ENCODE measurements at regions of chr12 and their contacts with region 1.

Region 1: DNA sequence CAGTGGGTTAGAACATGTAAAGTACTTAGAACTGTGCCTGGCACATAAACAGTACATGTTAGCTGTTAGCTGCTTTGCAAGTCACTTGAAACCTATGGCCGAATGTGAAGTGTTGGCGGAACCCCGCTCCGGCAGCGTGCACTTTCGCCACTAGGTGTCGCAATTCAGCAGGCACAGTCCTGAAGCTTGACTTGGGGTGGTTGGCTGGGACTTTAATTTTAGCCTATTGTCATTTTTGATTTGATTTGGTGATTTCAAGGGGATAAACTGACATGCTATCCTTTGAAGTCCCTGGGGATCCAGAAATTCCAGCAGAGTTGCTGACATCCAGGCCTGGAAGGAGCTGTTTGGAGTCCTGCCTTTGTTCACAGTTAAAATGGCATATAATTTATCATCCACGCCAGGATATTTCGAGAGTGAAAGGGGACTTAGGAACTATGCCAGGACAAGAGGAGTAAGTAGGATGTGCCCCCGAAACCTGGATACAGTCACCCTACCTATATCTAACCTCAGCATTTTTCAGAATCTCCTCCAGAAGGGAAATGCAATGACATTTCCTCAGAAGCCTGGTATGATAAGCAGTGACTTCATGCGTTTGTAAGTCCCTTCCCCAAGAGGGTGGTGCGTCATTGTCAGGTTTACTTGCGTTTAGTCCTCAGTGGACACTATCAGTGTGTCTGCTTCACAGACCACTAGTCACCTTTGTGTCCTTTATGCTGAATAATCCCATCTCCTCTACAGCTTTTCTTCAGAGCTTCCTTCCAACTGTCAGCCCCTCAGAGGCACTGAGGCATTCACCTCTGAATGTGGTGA is 3.5 kb upstream of the TSPAN9 start:
- DNase-seq: peak; percentile 72
- ATAC-seq: peak; percentile 76
- H3K4me3 ChIP-seq: no peak overlapping the region
- H3K27ac ChIP-seq: no peak overlapping the region
- H3K4me1 ChIP-seq: no peaks in the 10 kb centered on the region; the same call in 1 of the 2 replicates
- H3K27me3 ChIP-seq: no peaks in the 10 kb centered on the region
- CTCF ChIP-seq: peak; percentile 94

Region 2: DNA sequence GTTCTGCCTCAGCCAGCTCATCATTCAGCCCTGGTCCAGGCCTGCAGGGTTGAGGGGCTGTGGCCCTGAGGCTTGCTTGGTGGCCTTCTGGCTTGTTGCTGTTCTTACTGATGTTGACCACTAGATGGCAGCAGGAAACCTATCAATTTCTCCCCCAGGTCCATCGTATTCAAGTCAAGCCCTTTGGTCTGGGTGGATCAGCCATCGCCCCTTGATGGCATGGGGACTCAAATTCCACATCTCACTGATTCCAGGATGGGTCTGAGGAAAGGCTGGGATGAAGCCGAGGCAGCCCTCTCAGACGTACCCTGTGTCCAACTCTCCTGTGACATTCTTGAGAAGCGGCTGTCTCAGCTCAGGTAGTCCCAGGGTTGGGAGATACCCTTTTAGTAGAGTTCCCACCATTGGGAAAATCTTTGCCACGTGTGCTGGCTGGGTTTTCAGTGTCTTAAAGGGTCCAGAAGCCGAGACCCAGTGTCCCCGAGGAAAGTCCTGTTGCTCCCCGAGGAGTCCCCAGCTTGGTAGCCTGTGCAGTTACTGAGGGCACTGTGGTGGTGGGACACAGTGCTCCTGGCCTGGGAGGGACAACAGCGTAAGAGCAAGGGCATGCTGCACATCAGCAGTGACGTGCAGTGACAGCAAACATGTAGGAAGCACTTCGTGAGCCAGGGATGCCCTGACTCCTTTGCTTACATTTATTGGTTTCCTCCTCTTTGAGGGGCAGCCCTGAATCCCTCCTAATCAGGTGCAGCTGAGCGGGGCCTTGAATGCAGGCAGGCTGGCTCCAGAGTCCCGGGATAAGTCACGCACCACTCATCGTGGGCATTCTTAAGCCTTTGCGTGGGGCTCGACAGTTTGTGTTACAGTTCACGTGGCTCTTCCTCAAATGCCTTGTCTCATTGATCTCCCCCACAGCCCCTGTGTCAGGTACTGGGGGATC is 62.1 kb after region 1 on chr12:
- CTCF ChIA-PET with region 1: no interaction called
- POLR2A ChIA-PET with region 1: no interaction called
- in situ Hi-C with region 1: no loop called
- intact Hi-C with region 1: loop called (anchors 2 kb)
- DNase-seq: peak; percentile 46
- ATAC-seq: peak; percentile 89
- H3K4me3 ChIP-seq: no peak overlapping the region
- H3K27ac ChIP-seq: no peak overlapping the region
- H3K4me1 ChIP-seq: no peaks in the 10 kb centered on the region
- H3K27me3 ChIP-seq: no peaks in the 10 kb centered on the region
- CTCF ChIP-seq: peak; percentile 75

Region 3: GRCh38 chr12:3275171-3276041 is 201.8 kb after region 1 on chr12:
- CTCF ChIA-PET with region 1: interaction called, 9 read pairs
- POLR2A ChIA-PET with region 1: interaction called, 3 read pairs
- in situ Hi-C with region 1: no loop called
- intact Hi-C with region 1: loop called (anchors 5 kb)
- DNase-seq: peak; percentile 20
- ATAC-seq: peak; percentile 88
- H3K4me3 ChIP-seq: no peak overlapping the region
- H3K27ac ChIP-seq: no peak overlapping the region
- H3K4me1 ChIP-seq: no peaks in the 10 kb centered on the region
- H3K27me3 ChIP-seq: no peaks in the 10 kb centered on the region
- CTCF ChIP-seq: peak; percentile 90